ENCODE measurements at regions of chr2 and their contacts with region 1.

Region 1: GRCh38 chr2:234879671-234880455 is 72.0 kb upstream of the SH3BP4 start:
- DNase-seq: no peak
- H3K4me3 ChIP-seq: no peak overlapping the region
- H3K27ac ChIP-seq: no peak overlapping the region
- H3K4me1 ChIP-seq: peaks cover 5 to 7% of the 10 kb centered on the region in 2 donors
- H3K27me3 ChIP-seq: no peaks in the 10 kb centered on the region
- CTCF ChIP-seq: no peak
- POLR2A ChIP-seq: no peak

Region 2: DNA sequence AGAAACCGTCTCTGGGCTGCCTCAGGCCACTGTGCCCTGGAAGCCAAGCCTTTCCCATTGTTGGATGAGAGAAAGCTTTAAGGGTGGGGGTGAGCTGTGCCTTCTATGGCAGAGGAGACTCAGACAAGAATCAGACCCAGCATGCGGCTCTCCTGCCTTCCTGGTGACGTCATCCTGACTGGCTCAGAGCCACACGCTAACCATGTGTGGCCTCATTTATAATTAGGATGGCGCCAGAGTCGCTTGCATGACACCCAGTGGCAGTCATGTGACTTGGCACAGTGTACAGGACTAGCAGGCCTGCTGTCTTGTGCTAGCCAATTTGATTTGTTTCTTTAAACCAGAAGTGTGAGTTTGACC is 171.1 kb after region 1 on chr2:
- intact Hi-C with region 1: loop called (anchors 10 kb)
- DNase-seq: peak; percentile 82 to 90
- H3K4me3 ChIP-seq: no peak overlapping the region
- H3K27ac ChIP-seq: peak overlapping the region; percentile 34 to 55 (median 37)
- H3K4me1 ChIP-seq: peaks cover 6 to 15% of the 10 kb centered on the region in 2 donors
- H3K27me3 ChIP-seq: no peaks in the 10 kb centered on the region
- CTCF ChIP-seq: peak in 4 of 6 experiments; percentile 10 to 30 (median 18)
- POLR2A ChIP-seq: no peak

Region 3: GRCh38 chr2:235511187-235511661 is 631.4 kb after region 1 on chr2:
- intact Hi-C with region 1: no loop called
- DNase-seq: peak; percentile 88 to 91
- H3K4me3 ChIP-seq: no peak overlapping the region
- H3K27ac ChIP-seq: peak overlapping the region in 2 of 3 donors; percentile 11 to 63
- H3K4me1 ChIP-seq: peaks cover 13 to 30% of the 10 kb centered on the region in 2 donors
- H3K27me3 ChIP-seq: no peaks in the 10 kb centered on the region
- CTCF ChIP-seq: no peak
- POLR2A ChIP-seq: no peak